Gastrocnemius medialis (tissue), 4 donors: ENCODE measurements at regions of chr9 and their contacts with region 1.

Region 1: GRCh38 chr9:107732781-107733522 is 243.4 kb upstream of the KLF4 start:
- DNase-seq: peak; percentile 54 to 75
- ATAC-seq: peak; percentile 79 to 82
- H3K4me3 ChIP-seq: peak overlapping the region; percentile 32 to 42 (median 36)
- H3K27ac ChIP-seq: peak overlapping the region; percentile 78 to 88 (median 86)
- H3K4me1 ChIP-seq: peaks cover 17 to 19% of the 10 kb centered on the region in 2 donors
- H3K27me3 ChIP-seq: no peaks in the 10 kb centered on the region
- CTCF ChIP-seq: no peak
- POLR2A ChIP-seq: no peak

Region 2: DNA sequence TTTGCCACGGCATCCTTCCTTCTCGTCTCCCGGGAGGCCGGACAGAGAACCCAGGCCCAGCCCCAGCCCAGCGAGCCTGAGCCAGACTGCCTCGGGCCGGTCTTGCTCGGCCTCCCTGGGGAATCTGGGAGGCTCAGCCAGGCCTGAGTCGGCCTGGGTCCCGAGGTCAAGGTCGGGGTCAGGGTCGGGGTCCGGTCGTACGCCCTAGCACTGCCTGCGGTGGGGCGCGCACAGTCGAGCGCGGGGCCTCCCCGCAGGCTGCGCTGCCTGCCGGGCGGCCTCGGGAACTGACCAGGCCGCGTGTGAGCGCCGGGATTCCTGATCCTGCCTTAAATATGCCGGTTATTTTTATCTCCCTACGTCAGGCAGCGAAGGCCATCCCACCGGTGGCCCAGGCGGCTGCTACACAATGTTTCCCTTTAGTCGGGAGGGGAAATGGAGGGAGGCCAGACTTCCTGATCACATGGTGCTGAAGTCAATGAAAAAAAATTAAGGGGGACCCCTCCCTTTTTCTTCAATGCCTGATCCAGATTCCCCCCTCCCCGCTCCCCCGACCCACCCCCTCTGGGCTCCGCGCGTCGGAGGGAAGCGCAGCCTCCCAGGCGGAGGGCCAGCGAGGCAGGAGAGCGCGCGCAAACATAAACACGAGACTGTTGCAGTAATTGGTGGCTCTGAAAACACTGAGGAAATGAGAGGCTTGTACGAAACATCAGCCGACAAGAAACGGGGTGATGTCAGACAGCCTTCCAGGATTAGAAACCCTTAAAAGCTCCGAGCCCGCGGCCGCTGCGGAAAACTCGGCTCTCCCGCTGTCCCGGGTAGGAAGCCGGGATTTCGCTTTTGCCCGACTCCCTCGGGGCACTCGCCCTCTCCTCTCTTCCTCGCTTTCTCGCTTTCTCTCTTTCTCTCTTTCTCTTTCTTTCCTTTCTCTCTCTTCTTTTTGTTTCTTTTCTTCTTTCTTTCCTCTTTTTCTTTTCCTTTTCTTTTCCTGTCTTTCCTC is 95.2 kb before region 1 on chr9:
- in situ Hi-C with region 1: loop called in 1 of 4 experiments (anchors 5 kb)
- intact Hi-C with region 1: loop called (anchors 2 kb)
- DNase-seq: peak; percentile 87 to 93
- ATAC-seq: peak; percentile 89 to 91
- H3K4me3 ChIP-seq: peak overlapping the region; percentile 56 to 65 (median 56)
- H3K27ac ChIP-seq: peak overlapping the region; percentile 94 to 97 (median 96)
- H3K4me1 ChIP-seq: peaks cover 18 to 19% of the 10 kb centered on the region in 2 donors
- H3K27me3 ChIP-seq: no peaks in the 10 kb centered on the region
- CTCF ChIP-seq: peak; percentile 22 to 44 (median 27)
- POLR2A ChIP-seq: peak; percentile 98 to 99

Region 3: DNA sequence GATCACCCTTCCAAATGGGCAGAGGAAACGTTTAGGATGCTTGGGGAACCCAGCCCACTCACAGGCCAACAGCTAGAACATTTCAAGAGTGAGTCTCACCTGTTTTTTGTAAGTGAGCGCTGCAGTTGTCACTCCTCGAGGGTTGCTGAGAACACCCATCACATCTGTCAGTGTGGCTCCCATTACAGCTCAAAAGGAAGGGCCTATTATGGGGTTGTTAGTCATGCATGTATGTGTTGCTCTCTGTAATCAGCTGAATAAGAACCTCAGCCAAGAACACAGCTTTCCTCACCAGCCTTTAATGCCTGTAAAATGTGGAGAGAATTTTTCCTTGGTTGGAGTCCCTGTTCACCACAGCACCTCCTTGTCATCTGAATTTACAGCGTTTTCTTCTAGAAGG is 47.1 kb before region 1 on chr9:
- in situ Hi-C with region 1: no loop called
- intact Hi-C with region 1: loop called (anchors 2 kb)
- DNase-seq: peak; percentile 58 to 76
- ATAC-seq: peak; percentile 100
- H3K4me3 ChIP-seq: no peak overlapping the region
- H3K27ac ChIP-seq: peak overlapping the region; percentile 28 to 71 (median 64)
- H3K4me1 ChIP-seq: peaks cover 0 to 10% of the 10 kb centered on the region in 2 donors
- H3K27me3 ChIP-seq: no peaks in the 10 kb centered on the region
- CTCF ChIP-seq: no peak
- POLR2A ChIP-seq: no peak

Region 4: GRCh38 chr9:107712390-107712789 is 20.6 kb before region 1 on chr9:
- in situ Hi-C with region 1: no loop called
- intact Hi-C with region 1: loop called (anchors 2 kb)
- DNase-seq: no peak
- ATAC-seq: no peak
- H3K4me3 ChIP-seq: no peak overlapping the region
- H3K27ac ChIP-seq: no peak overlapping the region
- H3K4me1 ChIP-seq: peaks cover 0 to 6% of the 10 kb centered on the region in 2 donors
- H3K27me3 ChIP-seq: no peaks in the 10 kb centered on the region
- CTCF ChIP-seq: no peak
- POLR2A ChIP-seq: no peak

Region 5: DNA sequence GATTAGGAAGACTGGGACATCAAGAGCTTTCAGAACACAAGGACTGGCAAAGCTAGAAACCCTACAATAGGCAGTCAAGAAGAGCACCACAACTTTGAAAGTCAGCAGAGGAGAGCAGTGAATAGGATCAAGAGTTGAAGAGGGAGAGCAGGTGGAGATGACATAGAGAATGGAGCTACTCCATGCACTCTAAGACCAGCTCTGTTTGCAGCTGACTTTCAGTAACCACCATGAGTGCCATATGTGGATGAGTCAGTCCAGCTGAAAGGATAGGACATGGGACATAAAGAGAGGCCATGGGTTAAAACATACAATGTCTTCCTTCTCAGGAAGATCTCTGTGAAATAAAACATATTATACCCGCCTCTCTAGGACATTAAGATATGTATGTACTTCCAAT is 45.7 kb after region 1 on chr9:
- in situ Hi-C with region 1: no loop called
- intact Hi-C with region 1: no loop called
- DNase-seq: no peak
- ATAC-seq: no peak
- H3K4me3 ChIP-seq: no peak overlapping the region
- H3K27ac ChIP-seq: no peak overlapping the region
- H3K4me1 ChIP-seq: no peaks in the 10 kb centered on the region
- H3K27me3 ChIP-seq: no peaks in the 10 kb centered on the region
- CTCF ChIP-seq: no peak
- POLR2A ChIP-seq: no peak